Activated CD4-positive, alpha-beta memory T cell treated with anti-CD3 and anti-CD28 coated beads for 36 hours (primary cell): ENCODE measurements at regions of chrX and their contacts with region 1.

Region 1: DNA sequence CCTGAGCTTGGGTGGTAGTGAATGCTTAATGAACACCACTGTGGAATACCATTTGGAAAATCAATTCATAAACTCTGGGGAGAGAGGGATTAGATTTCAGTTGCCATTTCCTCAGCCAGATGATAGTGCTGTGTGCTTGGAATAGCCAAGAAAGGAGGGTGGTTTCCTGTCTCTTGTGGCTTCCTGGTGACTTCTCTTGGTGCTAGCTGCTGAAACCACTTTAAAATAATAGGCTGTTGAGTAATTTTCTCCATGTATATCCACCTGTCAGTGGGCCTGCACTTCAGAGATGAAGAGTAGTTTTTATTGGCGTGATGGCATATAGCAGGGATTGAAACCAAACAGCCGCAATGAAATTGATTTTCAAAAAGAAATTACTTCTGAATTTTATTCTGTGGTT is 11.8 kb downstream of the EDA start:
- DNase-seq: no peak
- H3K4me3 Mint-ChIP-seq: no peak overlapping the region
- H3K27ac Mint-ChIP-seq: peak overlapping the region; percentile 14
- H3K4me1 Mint-ChIP-seq: peaks cover 28% of the 10 kb centered on the region
- H3K27me3 Mint-ChIP-seq: no peaks in the 10 kb centered on the region

Region 2: DNA sequence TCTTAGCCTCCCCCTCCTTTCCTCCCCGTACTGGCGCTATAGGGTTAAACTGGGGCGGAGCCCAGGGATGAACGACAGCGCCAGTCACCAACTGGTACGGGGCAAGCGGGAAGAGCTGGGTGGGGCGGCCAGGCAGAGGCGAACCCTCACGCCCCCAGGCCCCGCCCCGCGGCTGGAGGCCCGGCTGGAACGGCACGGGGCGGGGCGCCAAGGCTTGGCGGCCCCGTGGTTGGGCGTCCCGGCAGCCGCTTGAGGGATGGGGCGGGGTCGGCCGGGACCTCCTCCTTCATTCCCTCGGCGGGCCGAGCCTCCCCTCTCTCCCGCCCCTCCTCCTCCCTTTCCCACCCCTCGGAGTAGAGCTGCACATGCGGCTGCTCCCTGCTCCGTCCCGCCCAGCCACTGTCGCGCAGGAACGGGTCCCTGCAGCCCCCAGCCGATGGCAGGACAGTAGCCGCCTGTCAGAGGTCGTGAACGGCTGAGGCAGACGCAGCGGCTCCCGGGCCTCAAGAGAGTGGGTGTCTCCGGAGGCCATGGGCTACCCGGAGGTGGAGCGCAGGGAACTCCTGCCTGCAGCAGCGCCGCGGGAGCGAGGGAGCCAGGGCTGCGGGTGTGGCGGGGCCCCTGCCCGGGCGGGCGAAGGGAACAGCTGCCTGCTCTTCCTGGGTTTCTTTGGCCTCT is 11.8 kb before region 1 on chrX and contains the start of gene EDA:
- CTCF ChIA-PET with region 1: no interaction called
- POLR2A ChIA-PET with region 1: no interaction called
- intact Hi-C with region 1: no loop called
- DNase-seq: peak; percentile 80
- H3K4me3 Mint-ChIP-seq: peak within 1 kb of the TSS; percentile 79
- H3K27ac Mint-ChIP-seq: no peak within 1 kb of the TSS
- H3K4me1 Mint-ChIP-seq: peaks cover 19% of the 10 kb centered on the region
- H3K27me3 Mint-ChIP-seq: peaks cover 4% of the 10 kb centered on the region
- total RNA-seq, gene EDA: 3.3 to 4.2 TPM

Region 3: DNA sequence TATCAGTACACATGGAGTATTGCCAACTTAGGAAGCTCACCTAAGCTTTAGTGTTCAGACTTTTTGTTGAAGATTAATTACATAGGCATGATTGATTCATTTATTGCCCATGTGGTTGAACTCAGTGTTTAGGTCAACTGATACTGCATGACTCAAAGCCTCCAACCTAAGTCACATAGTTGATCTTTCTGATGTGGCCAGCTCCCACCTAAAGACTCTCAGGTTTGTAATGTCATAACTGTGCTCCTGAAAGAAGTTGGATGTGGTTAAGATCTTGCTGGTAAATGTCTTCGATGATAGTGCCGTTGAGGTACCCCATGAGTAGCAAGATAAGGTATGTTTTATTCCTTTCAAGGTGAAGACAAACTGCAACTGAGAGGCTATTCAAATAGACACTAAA is 180.6 kb after region 1 on chrX:
- CTCF ChIA-PET with region 1: no interaction called
- POLR2A ChIA-PET with region 1: no interaction called
- intact Hi-C with region 1: loop called (anchors 5 kb)
- DNase-seq: peak; percentile 12
- H3K4me3 Mint-ChIP-seq: no peak overlapping the region
- H3K27ac Mint-ChIP-seq: no peak overlapping the region
- H3K4me1 Mint-ChIP-seq: peaks cover 13% of the 10 kb centered on the region
- H3K27me3 Mint-ChIP-seq: no peaks in the 10 kb centered on the region